Naive thymus-derived CD4-positive, alpha-beta T cell (primary cell): ENCODE measurements at regions of chr9 and their contacts with region 1.

Region 1: DNA sequence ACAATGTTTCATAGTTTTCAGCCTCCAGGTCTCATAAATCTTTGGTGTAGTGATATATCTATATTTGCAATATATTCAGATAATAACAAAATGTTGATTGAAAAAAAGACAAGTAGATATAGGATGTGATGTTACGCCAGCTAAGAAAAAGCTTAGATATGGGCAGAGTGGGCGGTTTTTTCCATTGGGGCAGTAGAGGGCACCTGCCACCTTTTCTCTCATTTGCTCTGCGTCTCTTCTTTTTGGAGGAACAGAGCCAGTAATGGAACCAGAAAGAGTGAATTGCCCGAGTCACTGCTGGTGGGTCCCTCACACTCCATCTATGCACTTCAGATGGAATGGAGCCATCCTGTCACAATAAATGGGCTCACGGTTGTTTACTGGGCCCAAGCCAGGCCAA is 62.1 kb upstream of the FANCC start:
- DNase-seq: peak in 7 of 9 donors; percentile 10 to 50 (median 42)
- ATAC-seq: no peak
- H3K4me3 ChIP-seq: no peak overlapping the region
- H3K4me3 Mint-ChIP-seq: no peak overlapping the region
- H3K27ac ChIP-seq: no peak overlapping the region
- H3K27ac Mint-ChIP-seq: no peak overlapping the region
- H3K4me1 ChIP-seq: no peaks in the 10 kb centered on the region
- H3K4me1 Mint-ChIP-seq: peaks cover 0 to 11% (median 0%) of the 10 kb centered on the region in 7 donors
- H3K27me3 ChIP-seq: no peaks in the 10 kb centered on the region
- H3K27me3 Mint-ChIP-seq: peaks cover 25 to 42% (median 31%) of the 10 kb centered on the region in 5 donors

Region 2: GRCh38 chr9:95025213-95026147 is 354.1 kb before region 1 on chr9:
- CTCF ChIA-PET with region 1: no interaction called
- POLR2A ChIA-PET with region 1: no interaction called
- intact Hi-C with region 1: no loop called
- DNase-seq: no peak
- ATAC-seq: peak; percentile 70
- H3K4me3 ChIP-seq: no peak overlapping the region
- H3K4me3 Mint-ChIP-seq: no peak overlapping the region
- H3K27ac ChIP-seq: no peak overlapping the region
- H3K27ac Mint-ChIP-seq: no peak overlapping the region
- H3K4me1 ChIP-seq: no peaks in the 10 kb centered on the region
- H3K4me1 Mint-ChIP-seq: peaks cover 0 to 2% (median 0%) of the 10 kb centered on the region in 7 donors
- H3K27me3 ChIP-seq: no peaks in the 10 kb centered on the region
- H3K27me3 Mint-ChIP-seq: no peaks in the 10 kb centered on the region

Region 3: DNA sequence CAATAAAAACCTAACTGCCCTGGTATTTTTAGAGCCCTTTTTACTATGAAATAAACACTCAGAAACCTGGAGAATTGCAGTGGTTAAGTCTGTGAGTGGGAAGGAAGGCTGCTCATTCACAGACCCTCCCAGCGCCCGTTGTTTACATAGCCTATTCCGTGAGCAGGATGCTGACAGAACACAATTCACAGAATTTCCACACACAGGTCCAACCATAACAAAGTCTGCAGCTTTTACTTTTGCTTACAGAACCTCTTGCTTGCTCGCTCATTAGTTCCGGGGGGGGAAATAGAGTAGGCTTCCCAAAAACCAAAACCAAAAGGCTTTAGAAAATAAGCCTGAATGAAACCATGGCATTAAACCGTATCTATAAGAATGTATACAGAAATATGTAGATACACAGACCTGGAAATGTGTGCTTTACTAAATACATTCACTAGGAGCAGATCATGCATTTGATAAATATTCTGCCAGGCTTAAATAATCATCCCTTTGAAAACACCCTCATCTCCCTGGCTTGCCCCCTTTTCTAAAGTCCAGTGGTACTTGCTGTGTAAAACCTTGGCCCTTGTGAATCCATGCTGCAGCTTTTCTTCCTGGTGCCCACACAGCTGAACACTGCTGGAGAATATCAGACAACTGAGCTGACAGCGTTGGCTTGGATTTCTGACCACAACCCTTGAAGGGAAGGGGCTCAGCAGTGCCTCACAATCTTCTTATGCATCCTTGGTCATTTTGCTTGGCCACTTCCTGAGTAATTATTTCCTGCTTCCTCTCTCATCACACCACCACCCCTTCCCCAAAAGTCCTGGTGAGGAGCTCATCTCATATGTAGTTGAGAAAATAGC is 190.2 kb before region 1 on chr9:
- CTCF ChIA-PET with region 1: no interaction called
- POLR2A ChIA-PET with region 1: no interaction called
- intact Hi-C with region 1: no loop called
- DNase-seq: peak in 2 of 9 donors; percentile 5 to 42
- ATAC-seq: peak; percentile 32
- H3K4me3 ChIP-seq: no peak overlapping the region
- H3K4me3 Mint-ChIP-seq: peak overlapping the region in 9 of 10 donors; percentile 7 to 77 (median 55)
- H3K27ac ChIP-seq: no peak overlapping the region
- H3K27ac Mint-ChIP-seq: peak overlapping the region in 8 of 9 donors; percentile 26 to 89 (median 63)
- H3K4me1 ChIP-seq: no peaks in the 10 kb centered on the region
- H3K4me1 Mint-ChIP-seq: peaks cover 24 to 47% (median 30%) of the 10 kb centered on the region in 7 donors
- H3K27me3 ChIP-seq: no peaks in the 10 kb centered on the region
- H3K27me3 Mint-ChIP-seq: no peaks in the 10 kb centered on the region

Region 4: GRCh38 chr9:95574176-95574575 is 194.5 kb after region 1 on chr9:
- CTCF ChIA-PET with region 1: no interaction called
- POLR2A ChIA-PET with region 1: no interaction called
- intact Hi-C with region 1: loop called in 1 of 2 experiments (anchors 2 kb)
- DNase-seq: no peak
- ATAC-seq: no peak
- H3K4me3 ChIP-seq: no peak overlapping the region
- H3K4me3 Mint-ChIP-seq: no peak overlapping the region
- H3K27ac ChIP-seq: no peak overlapping the region
- H3K27ac Mint-ChIP-seq: no peak overlapping the region
- H3K4me1 ChIP-seq: no peaks in the 10 kb centered on the region
- H3K4me1 Mint-ChIP-seq: peaks cover 8 to 23% (median 13%) of the 10 kb centered on the region in 7 donors
- H3K27me3 ChIP-seq: no peaks in the 10 kb centered on the region
- H3K27me3 Mint-ChIP-seq: peaks cover 13 to 33% (median 29%) of the 10 kb centered on the region in 5 donors